ENCODE measurements at regions of chr15 and their contacts with region 1.

Region 1: GRCh38 chr15:99359769-99360168 is 108.5 kb downstream of the LRRC28 start:
- DNase-seq: no peak
- ATAC-seq: no peak
- H3K4me3 Mint-ChIP-seq: no peak overlapping the region
- H3K27ac Mint-ChIP-seq: peak overlapping the region; percentile 0
- H3K4me1 Mint-ChIP-seq: peaks cover 15% of the 10 kb centered on the region
- H3K27me3 Mint-ChIP-seq: no peaks in the 10 kb centered on the region
- CTCF ChIP-seq: no peak

Region 2: DNA sequence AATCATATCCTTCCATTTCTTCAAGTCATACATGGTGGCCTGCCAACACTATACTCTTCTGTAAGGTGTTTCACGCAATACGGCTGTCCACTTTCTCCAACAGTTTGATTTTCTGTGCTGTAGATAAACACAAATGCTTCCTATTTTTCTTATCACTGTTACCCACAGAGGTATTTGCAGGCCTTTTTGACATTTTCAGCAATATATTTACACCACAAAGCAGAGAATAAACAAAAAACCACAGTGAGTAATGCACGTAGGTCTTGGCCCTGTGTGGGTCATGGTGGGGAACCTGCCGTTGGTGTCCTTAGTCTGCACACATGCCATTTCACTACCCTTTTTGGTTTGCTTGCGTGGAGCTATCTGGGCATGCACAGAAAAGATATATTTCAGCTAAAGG is 49.0 kb before region 1 on chr15:
- CTCF ChIA-PET with region 1: no interaction called
- POLR2A ChIA-PET with region 1: no interaction called
- intact Hi-C with region 1: no loop called
- DNase-seq: no peak
- ATAC-seq: no peak
- H3K4me3 Mint-ChIP-seq: no peak overlapping the region
- H3K27ac Mint-ChIP-seq: no peak overlapping the region
- H3K4me1 Mint-ChIP-seq: no peaks in the 10 kb centered on the region
- H3K27me3 Mint-ChIP-seq: no peaks in the 10 kb centered on the region
- CTCF ChIP-seq: no peak

Region 3: DNA sequence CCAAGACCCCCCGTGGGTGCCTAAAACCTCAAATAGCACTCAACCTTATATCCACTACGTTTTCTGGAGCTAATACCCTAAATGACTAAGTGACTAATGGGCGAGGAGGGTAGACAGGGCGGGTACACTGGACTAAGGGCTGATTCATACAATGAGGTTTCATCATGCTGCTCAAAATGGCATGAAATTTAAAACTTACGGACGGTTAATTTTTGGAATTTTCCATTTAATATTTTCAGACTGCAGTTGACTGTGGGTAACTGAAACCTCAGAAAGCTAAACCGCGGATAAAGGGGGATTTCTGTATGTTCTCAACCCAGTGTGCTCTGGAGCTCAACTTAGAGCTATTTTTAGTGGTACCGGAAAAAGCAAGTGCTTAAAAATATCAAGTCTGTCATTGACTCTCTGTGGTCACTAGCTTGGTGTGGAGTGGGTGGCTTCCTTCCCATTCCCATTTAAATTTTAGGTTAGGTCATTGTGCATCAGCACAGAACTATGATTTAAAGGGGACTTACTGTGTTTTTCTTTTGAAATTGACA is 35.6 kb before region 1 on chr15:
- CTCF ChIA-PET with region 1: no interaction called
- POLR2A ChIA-PET with region 1: no interaction called
- intact Hi-C with region 1: loop called (anchors 5 kb)
- DNase-seq: no peak
- ATAC-seq: peak; percentile 91
- H3K4me3 Mint-ChIP-seq: peak overlapping the region; percentile 24
- H3K27ac Mint-ChIP-seq: peak overlapping the region; percentile 61
- H3K4me1 Mint-ChIP-seq: peaks cover 32% of the 10 kb centered on the region
- H3K27me3 Mint-ChIP-seq: no peaks in the 10 kb centered on the region
- CTCF ChIP-seq: no peak

Measured in activated B cell treated with CpG ODN at 0.5 μM for 24 hours (primary cell).